ENCODE measurements at regions of chr4 and their contacts with region 1.

Region 1: DNA sequence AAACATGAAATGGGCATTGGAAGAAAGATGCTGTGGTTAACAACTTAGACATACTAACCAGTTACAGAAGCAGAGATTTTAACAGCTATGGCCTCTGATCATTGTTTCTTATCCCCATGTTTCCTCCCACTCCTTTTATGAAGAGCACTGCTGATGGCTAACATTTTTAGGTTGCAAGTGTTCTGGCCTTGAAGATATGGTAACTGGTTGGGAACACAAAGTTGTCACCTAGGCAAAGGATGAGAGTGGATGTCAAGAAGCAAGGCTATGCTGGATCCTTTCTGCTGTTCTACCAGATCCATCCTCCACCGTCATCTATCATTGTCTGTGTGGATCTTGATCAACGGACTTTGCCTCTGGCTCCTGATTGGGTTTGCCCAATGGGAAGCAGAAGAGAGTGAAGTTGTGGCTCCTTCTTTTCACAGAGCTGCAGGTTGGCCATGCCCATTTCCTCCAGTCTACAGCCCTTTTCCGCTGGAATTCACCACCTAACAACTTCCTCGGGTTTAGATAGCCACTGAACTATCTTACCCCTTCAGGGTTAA is 48.9 kb upstream of the SPP1 start:
- DNase-seq: no peak
- H3K4me3 ChIP-seq: no peak overlapping the region
- H3K27ac ChIP-seq: no peak overlapping the region
- H3K4me1 ChIP-seq: no peaks in the 10 kb centered on the region
- H3K27me3 ChIP-seq: no peaks in the 10 kb centered on the region
- CTCF ChIP-seq: no peak

Region 2: DNA sequence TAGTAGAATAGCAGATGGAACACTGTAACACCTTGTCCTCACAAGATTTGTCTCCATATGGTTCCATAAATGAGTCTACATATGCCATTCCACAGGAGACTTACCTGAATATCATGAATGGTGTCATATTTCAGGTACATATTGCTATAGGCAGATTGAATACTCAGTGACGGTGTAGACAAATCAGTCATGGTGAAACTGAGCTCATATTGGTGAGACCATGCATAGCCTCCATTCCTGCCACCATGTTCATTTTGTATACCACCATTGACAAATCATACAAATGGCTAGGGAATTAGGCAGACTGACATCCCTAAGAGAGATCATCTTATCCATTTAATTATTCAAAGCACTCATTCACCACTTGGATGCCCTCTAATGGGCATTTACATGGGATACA is 10.9 kb after region 1 on chr4:
- intact Hi-C with region 1: loop called (anchors 1 kb)
- DNase-seq: no peak
- H3K4me3 ChIP-seq: no peak overlapping the region
- H3K27ac ChIP-seq: no peak overlapping the region
- H3K4me1 ChIP-seq: peaks cover 0 to 7% (median 0%) of the 10 kb centered on the region in 4 donors
- H3K27me3 ChIP-seq: no peaks in the 10 kb centered on the region
- CTCF ChIP-seq: no peak

Region 3: GRCh38 chr4:87973283-87974169 is 46.9 kb after region 1 on chr4:
- intact Hi-C with region 1: no loop called
- DNase-seq: peak; percentile 51 to 68
- H3K4me3 ChIP-seq: peak overlapping the region in 1 of 2 donors; percentile 3
- H3K27ac ChIP-seq: no peak overlapping the region
- H3K4me1 ChIP-seq: peaks cover 0 to 3% (median 0%) of the 10 kb centered on the region in 4 donors
- H3K27me3 ChIP-seq: no peaks in the 10 kb centered on the region
- CTCF ChIP-seq: peak; percentile 68 to 76

Measured in tibial artery (tissue), 4 donors.